ENCODE measurements at regions of chr5 and their contacts with region 1.

Region 1: DNA sequence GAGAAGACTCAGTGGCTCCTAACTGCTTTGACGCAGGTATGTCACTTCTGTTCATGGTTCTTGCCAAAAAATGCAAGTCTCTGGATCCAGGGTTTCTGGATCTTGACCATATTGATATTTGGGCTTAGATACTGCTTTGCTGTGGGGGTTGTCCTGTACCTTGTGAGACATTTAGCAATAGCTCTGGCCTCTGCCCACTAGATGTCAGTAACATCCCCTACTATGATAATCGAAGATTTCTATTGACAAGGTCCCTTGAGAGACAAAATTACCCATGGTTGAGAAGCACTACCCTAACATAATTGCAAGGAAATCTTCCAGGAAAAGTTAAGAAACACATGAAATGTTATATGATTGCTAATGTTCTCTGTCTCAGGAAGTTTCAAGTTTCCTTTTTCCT is 285.4 kb downstream of the TMEM232 start:
- DNase-seq: no peak
- H3K4me3 ChIP-seq: no peak overlapping the region
- H3K27ac ChIP-seq: no peak overlapping the region
- H3K4me1 ChIP-seq: peaks cover 0 to 3% of the 10 kb centered on the region in 2 donors
- H3K27me3 ChIP-seq: no peaks in the 10 kb centered on the region
- CTCF ChIP-seq: peak in 1 of 3 experiments; percentile 33

Region 2: GRCh38 chr5:110549301-110549700 is 108.3 kb after region 1 on chr5:
- intact Hi-C with region 1: no loop called
- DNase-seq: no peak
- H3K4me3 ChIP-seq: no peak overlapping the region
- H3K27ac ChIP-seq: no peak overlapping the region
- H3K4me1 ChIP-seq: no peaks in the 10 kb centered on the region
- H3K27me3 ChIP-seq: no peaks in the 10 kb centered on the region
- CTCF ChIP-seq: no peak

Region 3: GRCh38 chr5:110588286-110588965 is 147.4 kb after region 1 on chr5:
- intact Hi-C with region 1: loop called (anchors 10 kb)
- DNase-seq: no peak
- H3K4me3 ChIP-seq: no peak overlapping the region
- H3K27ac ChIP-seq: no peak overlapping the region
- H3K4me1 ChIP-seq: no peaks in the 10 kb centered on the region
- H3K27me3 ChIP-seq: no peaks in the 10 kb centered on the region
- CTCF ChIP-seq: no peak

Region 4: DNA sequence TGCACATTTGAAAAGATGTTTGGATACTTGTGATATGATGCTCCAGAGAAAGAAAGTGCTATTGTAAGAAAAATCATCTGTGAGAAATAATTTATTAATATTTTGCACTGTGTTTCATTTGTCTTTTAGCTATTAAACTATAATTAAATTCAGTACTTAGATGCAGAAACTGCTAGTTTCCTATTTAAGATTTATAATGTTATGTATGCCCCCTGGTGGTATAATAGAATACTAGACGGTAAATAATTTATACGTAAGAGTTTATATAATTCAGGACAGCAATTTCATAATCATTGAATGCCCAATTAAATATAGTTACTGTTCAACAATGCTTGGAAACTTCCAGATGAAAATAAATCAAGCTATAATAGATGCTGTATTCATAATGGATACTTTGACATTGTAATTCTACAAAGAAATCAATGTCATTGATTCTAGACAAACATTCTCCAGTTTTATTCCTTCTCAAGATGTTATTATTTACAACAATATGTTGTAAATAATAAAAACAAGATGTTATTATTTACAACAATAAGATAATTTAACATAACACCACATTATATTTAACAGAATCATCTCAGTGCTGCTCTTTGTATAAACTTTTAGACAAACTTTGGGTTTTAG is 184.5 kb after region 1 on chr5:
- intact Hi-C with region 1: loop called (anchors 5 kb)
- DNase-seq: no peak
- H3K4me3 ChIP-seq: no peak overlapping the region
- H3K27ac ChIP-seq: no peak overlapping the region
- H3K4me1 ChIP-seq: no peaks in the 10 kb centered on the region
- H3K27me3 ChIP-seq: no peaks in the 10 kb centered on the region
- CTCF ChIP-seq: peak; percentile 30 to 51 (median 38)

Region 5: GRCh38 chr5:110716247-110717245 is 275.5 kb after region 1 on chr5:
- intact Hi-C with region 1: no loop called
- DNase-seq: no peak
- H3K4me3 ChIP-seq: no peak overlapping the region
- H3K27ac ChIP-seq: no peak overlapping the region
- H3K4me1 ChIP-seq: no peaks in the 10 kb centered on the region
- H3K27me3 ChIP-seq: no peaks in the 10 kb centered on the region
- CTCF ChIP-seq: no peak

Region 6: GRCh38 chr5:110738812-110739651 is 298.0 kb after region 1 on chr5 and contains the start of gene SLC25A46:
- intact Hi-C with region 1: no loop called
- DNase-seq: peak; percentile 63 to 94
- H3K4me3 ChIP-seq: peak within 1 kb of the TSS; percentile 85 to 98
- H3K27ac ChIP-seq: peak within 1 kb of the TSS; percentile 78 to 87
- H3K4me1 ChIP-seq: peaks cover 2 to 3% of the 10 kb centered on the region in 2 donors
- H3K27me3 ChIP-seq: no peaks in the 10 kb centered on the region
- CTCF ChIP-seq: no peak
- total RNA-seq, gene SLC25A46: 22.1 TPM

Measured in ascending aorta (tissue), 2 donors.